CD4-positive, alpha-beta memory T cell (primary cell): ENCODE measurements at regions of chr15 and their contacts with region 1.

Region 1: DNA sequence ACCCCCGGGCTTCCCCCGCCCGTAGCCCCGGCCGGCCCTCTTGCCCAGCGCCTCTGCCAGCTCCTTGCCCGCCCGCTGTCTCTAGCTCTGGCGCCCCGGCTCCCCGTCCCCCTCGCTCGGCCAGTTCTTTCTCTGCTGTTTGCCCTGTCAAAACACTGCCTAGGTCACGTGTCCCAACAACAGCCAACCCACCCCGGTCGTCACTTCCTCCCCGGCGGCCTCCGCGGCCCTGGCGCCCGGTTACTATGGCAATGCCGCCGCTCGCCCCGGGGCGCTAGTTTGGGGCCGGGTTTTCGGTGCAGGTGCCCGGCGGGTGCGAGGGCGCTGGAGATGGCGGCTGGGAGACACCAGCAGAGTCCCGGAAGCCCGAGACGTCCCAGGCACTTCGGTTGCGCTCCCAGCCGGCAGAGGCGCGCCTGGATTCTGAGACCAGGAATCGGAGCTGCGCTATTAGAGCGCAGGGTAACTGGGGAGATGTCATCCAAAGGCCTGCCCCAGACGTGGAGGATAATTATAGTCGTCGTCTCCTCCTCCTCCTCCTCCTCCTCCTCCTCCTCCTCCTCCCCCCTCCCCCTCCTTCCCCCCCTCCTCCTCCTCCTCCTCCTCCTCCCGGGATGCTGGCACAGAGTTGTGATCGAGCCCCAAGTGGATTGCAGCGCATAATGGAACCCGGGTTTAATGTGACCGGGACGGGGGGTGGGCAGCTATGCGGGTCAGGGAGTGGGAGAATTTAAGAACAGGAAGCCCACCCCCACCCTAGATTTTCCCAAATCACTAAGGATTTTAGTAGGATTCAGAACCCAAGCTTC is at the start of gene ATOSA:
- DNase-seq: peak; percentile 91 to 96 (median 92)
- H3K4me3 ChIP-seq: peak within 1 kb of the TSS; percentile 55 to 82
- H3K4me3 Mint-ChIP-seq: peak within 1 kb of the TSS; percentile 93 to 99 (median 99)
- H3K27ac ChIP-seq: peak within 1 kb of the TSS; percentile 97
- H3K27ac Mint-ChIP-seq: peak within 1 kb of the TSS; percentile 93 to 100 (median 100)
- H3K4me1 ChIP-seq: peaks cover 61% of the 10 kb centered on the region
- H3K4me1 Mint-ChIP-seq: peaks cover 28 to 80% (median 41%) of the 10 kb centered on the region in 4 donors
- H3K27me3 ChIP-seq: no peaks in the 10 kb centered on the region
- H3K27me3 Mint-ChIP-seq: no peaks in the 10 kb centered on the region
- total RNA-seq, gene ATOSA: 95.6 to 97.1 TPM

Region 2: DNA sequence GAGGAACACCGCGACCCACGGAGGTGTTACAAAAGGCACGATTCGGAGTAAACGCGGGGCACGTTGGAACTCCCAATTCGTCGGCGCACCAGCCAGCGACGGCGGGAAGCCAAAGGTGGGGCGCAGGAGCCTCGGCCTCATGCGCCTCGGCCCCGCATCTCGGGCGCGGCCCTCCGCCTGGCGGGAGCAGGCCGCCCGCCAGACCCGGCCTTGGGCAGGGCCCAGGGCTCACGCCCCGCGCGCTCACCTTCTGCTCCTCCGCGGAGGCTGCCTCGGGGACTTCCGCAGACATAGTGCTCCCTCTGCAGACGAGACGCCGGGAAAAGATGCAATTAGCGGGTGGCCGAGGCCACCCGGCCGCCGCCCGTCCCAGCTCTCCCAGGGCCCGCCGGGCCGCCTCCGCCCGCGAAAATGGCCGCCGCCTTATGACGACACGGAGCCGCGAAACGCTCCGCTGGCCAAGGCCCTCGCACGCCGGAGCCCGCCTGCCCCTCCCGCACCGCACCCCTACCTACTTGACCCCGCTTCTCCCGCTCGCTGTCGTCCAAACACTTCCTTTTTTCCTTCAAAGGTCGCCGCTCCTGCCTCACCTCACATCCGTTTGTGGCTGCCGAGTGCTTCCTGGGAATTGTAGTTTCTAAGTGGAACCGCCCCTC is 110.7 kb before region 1 on chr15 and contains the start of gene ARPP19:
- CTCF ChIA-PET with region 1: no interaction called
- POLR2A ChIA-PET with region 1: interaction called, 3 read pairs
- intact Hi-C with region 1: loop called (anchors 1 kb)
- DNase-seq: peak; percentile 78 to 84 (median 80)
- H3K4me3 ChIP-seq: peak within 1 kb of the TSS; percentile 64 to 80
- H3K4me3 Mint-ChIP-seq: peak within 1 kb of the TSS; percentile 94 to 100 (median 96)
- H3K27ac ChIP-seq: peak within 1 kb of the TSS; percentile 98
- H3K27ac Mint-ChIP-seq: peak within 1 kb of the TSS; percentile 98 to 100 (median 100)
- H3K4me1 ChIP-seq: peaks cover 44% of the 10 kb centered on the region
- H3K4me1 Mint-ChIP-seq: peaks cover 31 to 46% (median 38%) of the 10 kb centered on the region in 4 donors
- H3K27me3 ChIP-seq: no peaks in the 10 kb centered on the region
- H3K27me3 Mint-ChIP-seq: no peaks in the 10 kb centered on the region
- total RNA-seq, gene ARPP19: 105 to 130 TPM

Region 3: GRCh38 chr15:52658955-52659354 is 20.5 kb before region 1 on chr15:
- CTCF ChIA-PET with region 1: interaction called, 5 read pairs
- POLR2A ChIA-PET with region 1: interaction called, 10 read pairs
- intact Hi-C with region 1: loop called (anchors 2 kb)
- DNase-seq: peak; percentile 37 to 47 (median 45)
- H3K4me3 ChIP-seq: no peak overlapping the region
- H3K4me3 Mint-ChIP-seq: peak overlapping the region in 5 of 8 donors; percentile 17 to 68 (median 48)
- H3K27ac ChIP-seq: no peak overlapping the region
- H3K27ac Mint-ChIP-seq: peak overlapping the region; percentile 37 to 78 (median 63)
- H3K4me1 ChIP-seq: peaks cover 13% of the 10 kb centered on the region
- H3K4me1 Mint-ChIP-seq: peaks cover 29 to 63% (median 34%) of the 10 kb centered on the region in 4 donors
- H3K27me3 ChIP-seq: no peaks in the 10 kb centered on the region
- H3K27me3 Mint-ChIP-seq: no peaks in the 10 kb centered on the region

Region 4: GRCh38 chr15:52730173-52730572 is 50.7 kb after region 1 on chr15:
- CTCF ChIA-PET with region 1: interaction called, 62 read pairs
- POLR2A ChIA-PET with region 1: interaction called, 49 read pairs
- intact Hi-C with region 1: loop called (anchors 1 kb)
- DNase-seq: peak; percentile 57 to 75 (median 73)
- H3K4me3 ChIP-seq: no peak overlapping the region
- H3K4me3 Mint-ChIP-seq: peak overlapping the region in 5 of 8 donors; percentile 16 to 64 (median 41)
- H3K27ac ChIP-seq: no peak overlapping the region
- H3K27ac Mint-ChIP-seq: peak overlapping the region; percentile 51 to 91 (median 80)
- H3K4me1 ChIP-seq: peaks cover 16% of the 10 kb centered on the region
- H3K4me1 Mint-ChIP-seq: peaks cover 8 to 21% (median 14%) of the 10 kb centered on the region in 4 donors
- H3K27me3 ChIP-seq: no peaks in the 10 kb centered on the region
- H3K27me3 Mint-ChIP-seq: peaks cover 0 to 2% of the 10 kb centered on the region in 2 donors